ENCODE measurements at regions of chr17 and their contacts with region 1.

Region 1: DNA sequence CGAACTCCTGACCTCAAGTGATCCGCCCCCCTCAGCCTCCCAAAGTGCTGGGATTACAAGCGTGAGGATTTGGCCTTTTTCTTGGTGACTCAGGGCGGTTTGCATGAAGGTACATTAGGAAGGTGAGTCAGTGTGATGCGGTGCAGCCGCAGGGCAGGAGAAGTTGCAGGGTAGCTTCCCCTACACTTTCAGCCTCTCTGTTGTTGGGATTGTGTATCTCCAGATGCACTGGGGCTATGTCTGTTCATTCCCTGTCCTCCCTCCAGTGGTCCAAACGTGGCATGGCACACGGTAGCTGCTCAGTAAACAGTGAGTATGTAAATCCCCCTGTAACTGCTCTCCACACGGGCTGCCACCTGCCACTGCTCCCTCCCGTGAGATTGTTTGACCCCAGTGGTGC is 109.1 kb upstream of the CDC42EP4 start:
- DNase-seq: no peak
- H3K4me3 ChIP-seq: no peak overlapping the region
- H3K27ac ChIP-seq: no peak overlapping the region
- H3K4me1 ChIP-seq: no peaks in the 10 kb centered on the region
- H3K27me3 ChIP-seq: no peaks in the 10 kb centered on the region
- CTCF ChIP-seq: peak; percentile 18 to 54 (median 52); a peak in 3 of 4 replicates
- EP300 ChIP-seq: no peak
- POLR2A ChIP-seq: no peak
- RAD21 ChIP-seq: peak; percentile 25 to 50

Region 2: GRCh38 chr17:73410586-73411312 is 10.1 kb before region 1 on chr17:
- CTCF ChIA-PET with region 1: interaction called, 13 read pairs
- POLR2A ChIA-PET with region 1: no interaction called
- DNase-seq: no peak
- H3K4me3 ChIP-seq: no peak overlapping the region
- H3K27ac ChIP-seq: no peak overlapping the region
- H3K4me1 ChIP-seq: no peaks in the 10 kb centered on the region
- H3K27me3 ChIP-seq: no peaks in the 10 kb centered on the region
- CTCF ChIP-seq: no peak
- EP300 ChIP-seq: no peak
- POLR2A ChIP-seq: no peak
- RAD21 ChIP-seq: no peak

Region 3: DNA sequence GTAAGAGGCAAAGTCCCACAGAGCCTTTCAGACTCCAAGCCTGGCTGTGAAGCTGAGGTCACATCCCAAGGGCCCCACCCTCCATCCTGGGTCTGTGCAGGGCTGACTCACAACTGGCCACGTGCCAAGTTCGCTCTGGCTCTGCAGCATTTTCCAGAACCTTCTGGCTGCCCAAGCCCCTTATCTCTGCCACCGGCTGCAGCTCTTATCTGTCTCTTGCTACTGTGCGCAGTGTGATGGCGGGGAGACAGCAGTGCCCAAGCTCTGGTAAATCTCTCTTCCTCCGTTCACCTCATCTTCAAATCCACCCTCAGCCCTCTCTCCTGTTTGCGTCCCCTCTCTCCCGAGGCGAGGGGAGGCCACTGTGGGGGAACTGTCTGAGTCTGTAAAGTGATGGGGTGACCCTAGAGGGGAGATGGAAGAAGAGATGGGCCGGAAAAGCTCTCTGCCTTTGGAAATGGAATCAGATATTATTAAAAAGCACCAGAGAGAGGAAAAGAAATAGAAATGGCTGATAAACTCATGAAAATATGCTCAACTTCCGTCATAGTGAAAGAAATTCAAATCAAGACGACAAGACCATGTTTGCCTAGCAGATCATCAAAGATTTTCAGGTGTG is 53.6 kb after region 1 on chr17:
- CTCF ChIA-PET with region 1: no interaction called
- POLR2A ChIA-PET with region 1: no interaction called
- DNase-seq: no peak
- H3K4me3 ChIP-seq: no peak overlapping the region
- H3K27ac ChIP-seq: no peak overlapping the region
- H3K4me1 ChIP-seq: peaks cover 0 to 12% (median 4%) of the 10 kb centered on the region in 4 experiments; a peak in 3 of 7 replicates
- H3K27me3 ChIP-seq: no peaks in the 10 kb centered on the region
- CTCF ChIP-seq: no peak
- EP300 ChIP-seq: no peak
- POLR2A ChIP-seq: no peak
- RAD21 ChIP-seq: no peak